ENCODE measurements at regions of chr15 and their contacts with region 1.

Region 1: GRCh38 chr15:68229386-68230156 is at the start of gene CLN6:
- DNase-seq: peak; percentile 80
- H3K4me3 ChIP-seq: peak within 1 kb of the TSS; percentile 65 to 85 (median 77)
- H3K27ac ChIP-seq: peak within 1 kb of the TSS; percentile 71
- H3K4me1 ChIP-seq: peaks cover 15% of the 10 kb centered on the region
- H3K27me3 ChIP-seq: no peaks in the 10 kb centered on the region
- CTCF ChIP-seq: no peak
- POLR2A ChIP-seq: peak; percentile 67
- total RNA-seq, gene CLN6: 48.0 and 53.9 TPM in 2 replicates

Region 2: DNA sequence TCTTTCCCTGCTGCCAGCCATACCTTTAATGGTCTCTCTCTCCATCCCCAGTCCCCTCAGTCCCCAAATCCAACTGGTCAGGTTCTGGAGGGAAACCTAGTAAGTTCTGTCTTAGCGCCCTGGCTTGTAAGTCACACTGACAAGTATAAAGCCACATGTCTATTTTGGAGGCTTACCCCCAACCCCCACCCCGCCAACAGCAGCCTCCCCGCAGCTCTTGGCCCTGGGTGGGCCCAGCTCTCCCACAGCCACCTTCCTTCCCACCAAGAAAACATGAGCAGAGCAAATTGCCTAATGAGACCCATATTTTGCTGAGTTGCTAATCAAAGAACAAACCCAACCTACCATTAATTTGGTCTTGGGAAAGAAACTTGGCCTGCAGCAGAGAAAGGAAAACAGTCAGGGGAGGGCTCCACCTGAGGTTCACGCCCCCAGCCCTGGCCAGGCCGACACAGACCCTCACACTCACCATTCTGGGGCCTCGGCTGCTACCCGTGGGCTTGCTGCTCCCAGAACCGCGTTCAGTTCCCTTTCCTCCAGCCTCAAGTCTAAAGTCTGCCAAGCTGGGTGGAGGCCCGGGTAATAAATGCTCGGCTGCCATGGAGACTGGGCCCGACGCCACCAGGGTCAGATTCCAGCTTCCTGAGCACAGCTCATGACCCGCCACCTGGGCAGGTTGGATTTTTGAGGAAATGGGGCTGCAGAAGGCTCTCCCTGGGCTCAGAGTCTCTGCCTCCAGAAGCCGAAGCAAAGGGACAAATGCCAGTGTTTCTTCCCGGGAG is 24.6 kb before region 1 on chr15 and contains the start of gene CALML4:
- CTCF ChIA-PET with region 1: interaction called, 3 read pairs
- POLR2A ChIA-PET with region 1: no interaction called
- dilution Hi-C with region 1: no loop called
- intact Hi-C with region 1: loop called (anchors 2 kb)
- DNase-seq: peak; percentile 70
- H3K4me3 ChIP-seq: peak within 1 kb of the TSS in 1 of 3 experiments; percentile 15
- H3K27ac ChIP-seq: peak within 1 kb of the TSS; percentile 8
- H3K4me1 ChIP-seq: peaks cover 15% of the 10 kb centered on the region
- H3K27me3 ChIP-seq: no peaks in the 10 kb centered on the region
- CTCF ChIP-seq: no peak
- POLR2A ChIP-seq: no peak
- total RNA-seq, gene CALML4: 5.9 and 10.1 TPM in 2 replicates

Region 3: DNA sequence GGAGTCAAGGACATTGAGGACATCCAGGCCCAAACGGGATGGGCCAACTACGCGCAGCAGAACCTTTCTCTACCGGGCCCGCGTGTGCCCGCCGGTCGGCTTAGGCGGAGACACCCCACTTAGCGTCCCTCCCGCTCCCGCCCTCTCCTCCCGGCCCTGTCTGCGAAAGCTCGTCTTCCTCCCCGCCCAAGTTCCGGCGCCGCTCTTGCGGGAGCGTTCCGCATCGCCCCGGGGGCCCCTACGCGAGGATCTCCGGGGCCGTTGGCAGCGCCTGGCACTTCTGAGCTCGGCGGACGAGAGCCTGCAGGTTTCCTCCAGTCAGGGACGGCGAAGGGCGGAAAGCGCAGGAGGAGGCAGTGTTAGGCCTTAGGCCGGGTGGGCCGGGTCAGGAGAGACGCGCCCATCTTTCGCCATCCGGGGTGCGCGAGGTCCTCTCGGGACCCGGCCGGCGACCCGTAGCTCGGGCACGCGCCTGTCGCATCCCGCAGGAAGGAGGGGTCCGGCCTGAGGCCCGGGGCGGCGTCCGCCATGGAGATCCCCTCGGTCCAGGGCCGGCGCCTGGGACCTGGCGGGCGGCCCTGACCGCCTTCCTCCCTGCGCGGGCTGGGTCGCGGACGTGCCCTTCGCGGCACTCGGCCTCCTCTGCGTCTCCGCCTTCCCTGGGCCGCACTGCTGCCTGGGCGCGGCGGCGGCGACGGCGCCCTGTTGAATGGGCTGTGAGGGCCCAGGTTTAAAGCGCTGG is 48.2 kb after region 1 on chr15 and contains the start of gene FEM1B:
- CTCF ChIA-PET with region 1: no interaction called
- POLR2A ChIA-PET with region 1: no interaction called
- dilution Hi-C with region 1: no loop called
- intact Hi-C with region 1: loop called (anchors 1 kb)
- DNase-seq: peak; percentile 92
- H3K4me3 ChIP-seq: peak within 1 kb of the TSS; percentile 39 to 85 (median 68)
- H3K27ac ChIP-seq: peak within 1 kb of the TSS; percentile 59
- H3K4me1 ChIP-seq: peaks cover 37% of the 10 kb centered on the region
- H3K27me3 ChIP-seq: no peaks in the 10 kb centered on the region
- CTCF ChIP-seq: peak in 1 of 2 donors; percentile 25
- POLR2A ChIP-seq: peak; percentile 12
- total RNA-seq, gene FEM1B: 33.2 TPM in 2 replicates

Measured in endothelial cell of umbilical vein (primary cell).